ENCODE measurements at regions of chr1 and their contacts with region 1.

Region 1: GRCh38 chr1:11907275-11908094 is 18.7 kb downstream of the KIAA2013 start:
- DNase-seq: peak; percentile 94
- ATAC-seq: peak; percentile 65
- H3K4me3 Mint-ChIP-seq: peak overlapping the region; percentile 90
- H3K27ac Mint-ChIP-seq: peak overlapping the region; percentile 96
- H3K4me1 Mint-ChIP-seq: peaks cover 29% of the 10 kb centered on the region
- H3K27me3 Mint-ChIP-seq: peaks cover 14% of the 10 kb centered on the region
- CTCF ChIP-seq: peak; percentile 65

Region 2: DNA sequence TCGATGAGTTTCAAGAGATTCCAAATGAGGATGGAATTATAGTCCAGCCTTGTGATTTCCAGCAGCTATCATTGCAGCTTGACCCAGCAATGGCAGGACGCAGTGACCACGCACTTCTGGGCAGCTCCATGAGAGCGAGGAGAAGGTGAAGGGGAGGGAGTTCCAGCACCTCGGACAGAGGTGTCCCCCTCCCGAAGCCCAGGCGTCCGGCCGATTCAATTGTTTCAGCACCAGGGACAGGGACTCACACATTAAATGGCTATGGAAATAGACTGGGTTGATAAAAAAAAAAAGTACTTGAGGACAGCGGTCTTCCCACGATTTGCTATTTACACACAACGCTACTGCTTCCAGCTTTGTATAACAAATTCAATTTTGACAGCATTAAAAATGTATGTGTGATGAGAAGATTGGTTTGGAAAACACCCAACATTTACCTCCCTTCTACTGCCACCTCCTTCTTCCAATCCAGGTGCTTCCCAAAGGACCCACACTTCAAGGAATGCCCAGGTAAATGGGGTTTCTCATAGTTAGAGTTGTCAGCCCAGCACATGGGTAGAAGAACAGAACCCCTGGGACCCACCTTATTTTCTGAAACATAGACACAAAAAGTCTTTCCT is 356.7 kb before region 1 on chr1:
- CTCF ChIA-PET with region 1: no interaction called
- POLR2A ChIA-PET with region 1: no interaction called
- intact Hi-C with region 1: no loop called
- DNase-seq: peak; percentile 73
- ATAC-seq: peak; percentile 62
- H3K4me3 Mint-ChIP-seq: no peak overlapping the region
- H3K27ac Mint-ChIP-seq: no peak overlapping the region
- H3K4me1 Mint-ChIP-seq: peaks cover 4% of the 10 kb centered on the region
- H3K27me3 Mint-ChIP-seq: peaks cover 41% of the 10 kb centered on the region
- CTCF ChIP-seq: no peak

Region 3: DNA sequence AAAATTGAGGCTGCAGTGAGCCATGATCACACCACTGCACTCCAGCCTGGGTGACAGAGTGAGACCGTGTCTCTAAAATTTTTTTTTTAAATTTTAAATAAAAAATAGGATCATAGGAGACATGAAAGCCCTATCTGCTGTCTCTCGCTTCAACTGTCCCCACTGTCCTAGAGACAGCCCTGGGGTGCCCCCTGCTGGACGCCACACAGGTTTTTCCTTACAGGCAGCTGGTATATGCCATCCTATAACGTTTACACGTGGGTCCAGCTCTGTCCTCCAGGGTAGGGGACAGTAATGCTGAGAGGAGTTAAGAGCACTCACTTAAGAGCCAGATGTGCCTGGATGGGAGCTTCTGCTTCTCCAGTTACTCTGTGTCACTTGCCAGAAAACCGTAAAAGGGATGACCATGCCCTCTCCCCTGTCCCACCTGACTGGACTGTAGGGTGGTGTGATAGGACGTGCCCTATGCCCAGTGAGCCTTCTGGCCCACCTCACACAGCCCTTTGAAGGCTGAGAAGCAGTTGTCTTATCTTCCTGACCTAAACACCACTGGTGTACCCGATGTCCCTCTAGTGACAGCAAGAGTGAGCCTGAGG is 261.7 kb before region 1 on chr1:
- CTCF ChIA-PET with region 1: no interaction called
- POLR2A ChIA-PET with region 1: interaction called, 32 read pairs
- intact Hi-C with region 1: no loop called
- DNase-seq: peak; percentile 92
- ATAC-seq: peak; percentile 46
- H3K4me3 Mint-ChIP-seq: no peak overlapping the region
- H3K27ac Mint-ChIP-seq: no peak overlapping the region
- H3K4me1 Mint-ChIP-seq: peaks cover 11% of the 10 kb centered on the region
- H3K27me3 Mint-ChIP-seq: no peaks in the 10 kb centered on the region
- CTCF ChIP-seq: peak; percentile 85

Region 4: DNA sequence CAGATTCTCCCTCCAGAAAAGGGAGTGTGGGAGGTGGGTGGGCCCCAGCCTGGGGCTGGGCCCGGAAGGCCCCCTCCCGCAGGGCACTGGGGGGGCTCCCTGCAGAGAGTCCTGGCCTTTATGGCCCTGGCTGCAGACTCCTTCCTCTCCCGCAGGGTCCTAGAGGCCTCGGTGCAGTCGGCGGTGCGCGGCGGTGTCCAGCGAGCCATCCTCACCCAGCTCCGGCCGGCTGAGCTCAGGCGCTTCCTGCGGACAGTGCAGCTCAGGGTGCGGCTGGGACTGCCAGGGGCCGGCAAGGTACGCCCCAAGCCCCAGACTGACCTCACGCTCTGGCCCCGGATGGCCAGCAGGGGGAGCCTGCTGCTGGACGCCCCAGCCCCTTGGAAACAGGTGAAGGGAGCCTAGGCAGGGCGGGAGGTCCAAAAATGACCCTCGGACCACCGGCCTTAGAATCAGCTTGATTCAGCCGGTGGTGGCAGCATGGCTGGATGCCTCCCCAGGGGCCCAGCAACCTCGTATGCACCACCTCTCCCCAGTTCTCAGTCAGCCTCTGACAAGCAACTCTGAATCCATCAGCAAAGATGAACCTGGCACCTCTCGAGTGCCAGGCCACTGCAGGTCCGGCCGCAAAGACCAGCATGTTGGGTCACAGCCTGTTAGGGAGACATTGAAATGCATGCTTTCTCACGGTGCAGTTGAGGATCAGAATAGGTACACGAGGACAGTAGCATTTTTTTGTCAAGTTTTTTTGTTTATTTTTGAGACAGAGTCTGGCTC is 122.3 kb before region 1 on chr1:
- CTCF ChIA-PET with region 1: no interaction called
- POLR2A ChIA-PET with region 1: interaction called, 16 read pairs
- intact Hi-C with region 1: no loop called
- DNase-seq: peak; percentile 52
- ATAC-seq: peak; percentile 75
- H3K4me3 Mint-ChIP-seq: no peak overlapping the region
- H3K27ac Mint-ChIP-seq: no peak overlapping the region
- H3K4me1 Mint-ChIP-seq: peaks cover 3% of the 10 kb centered on the region
- H3K27me3 Mint-ChIP-seq: no peaks in the 10 kb centered on the region
- CTCF ChIP-seq: peak; percentile 80

Region 5: GRCh38 chr1:11851180-11851579 is 56.3 kb before region 1 on chr1:
- CTCF ChIA-PET with region 1: no interaction called
- POLR2A ChIA-PET with region 1: interaction called, 68 read pairs
- intact Hi-C with region 1: no loop called
- DNase-seq: no peak
- ATAC-seq: no peak
- H3K4me3 Mint-ChIP-seq: no peak overlapping the region
- H3K27ac Mint-ChIP-seq: no peak overlapping the region
- H3K4me1 Mint-ChIP-seq: no peaks in the 10 kb centered on the region
- H3K27me3 Mint-ChIP-seq: peaks cover 7% of the 10 kb centered on the region
- CTCF ChIP-seq: no peak

Region 6: DNA sequence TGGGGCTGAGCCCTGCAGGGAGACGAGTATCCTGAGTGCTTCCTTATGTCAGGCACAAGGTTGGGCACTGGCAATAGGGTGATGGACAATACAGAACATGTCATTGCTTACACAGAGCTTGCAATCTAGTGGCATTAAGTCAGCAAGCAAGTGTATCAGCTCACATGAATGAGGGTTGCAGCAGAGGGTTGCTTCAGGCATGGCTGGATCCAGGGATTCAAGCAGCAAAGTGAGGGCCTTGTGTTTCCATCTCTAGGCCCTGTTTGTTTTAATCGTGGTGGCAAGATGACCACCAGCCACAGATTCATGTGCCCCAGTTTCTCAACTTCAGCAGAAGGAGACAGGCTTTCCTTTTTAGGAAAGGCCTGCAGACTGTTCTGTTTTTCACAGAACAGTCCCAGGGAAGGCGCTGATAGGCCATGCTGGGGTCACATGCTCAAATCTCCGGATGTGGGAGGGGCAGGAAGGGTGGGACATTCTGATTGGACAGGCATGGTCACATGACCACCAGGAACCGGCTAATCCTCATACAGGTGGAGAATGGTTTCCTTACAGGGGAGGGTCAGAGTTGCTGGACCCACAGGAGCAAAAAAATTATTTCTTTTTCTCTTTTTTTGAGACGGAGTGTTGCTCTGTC is 41.5 kb after region 1 on chr1:
- CTCF ChIA-PET with region 1: no interaction called
- POLR2A ChIA-PET with region 1: interaction called, 12 read pairs
- intact Hi-C with region 1: no loop called
- DNase-seq: peak; percentile 35
- ATAC-seq: no peak
- H3K4me3 Mint-ChIP-seq: no peak overlapping the region
- H3K27ac Mint-ChIP-seq: no peak overlapping the region
- H3K4me1 Mint-ChIP-seq: no peaks in the 10 kb centered on the region
- H3K27me3 Mint-ChIP-seq: no peaks in the 10 kb centered on the region
- CTCF ChIP-seq: no peak

Region 7: GRCh38 chr1:12019858-12020509 is 112.5 kb after region 1 on chr1:
- CTCF ChIA-PET with region 1: no interaction called
- POLR2A ChIA-PET with region 1: interaction called, 57 read pairs
- intact Hi-C with region 1: no loop called
- DNase-seq: no peak
- ATAC-seq: no peak
- H3K4me3 Mint-ChIP-seq: peak overlapping the region; percentile 81
- H3K27ac Mint-ChIP-seq: peak overlapping the region; percentile 49
- H3K4me1 Mint-ChIP-seq: peaks cover 5% of the 10 kb centered on the region
- H3K27me3 Mint-ChIP-seq: no peaks in the 10 kb centered on the region
- CTCF ChIP-seq: no peak

Region 8: GRCh38 chr1:12087797-12088314 is 180.4 kb after region 1 on chr1:
- CTCF ChIA-PET with region 1: no interaction called
- POLR2A ChIA-PET with region 1: interaction called, 27 read pairs
- intact Hi-C with region 1: no loop called
- DNase-seq: peak; percentile 88
- ATAC-seq: peak; percentile 78
- H3K4me3 Mint-ChIP-seq: peak overlapping the region; percentile 25
- H3K27ac Mint-ChIP-seq: peak overlapping the region; percentile 90
- H3K4me1 Mint-ChIP-seq: peaks cover 37% of the 10 kb centered on the region
- H3K27me3 Mint-ChIP-seq: no peaks in the 10 kb centered on the region
- CTCF ChIP-seq: no peak

Region 9: GRCh38 chr1:12369258-12369657 is 461.8 kb after region 1 on chr1:
- CTCF ChIA-PET with region 1: no interaction called
- POLR2A ChIA-PET with region 1: no interaction called
- intact Hi-C with region 1: no loop called
- DNase-seq: no peak
- ATAC-seq: no peak
- H3K4me3 Mint-ChIP-seq: no peak overlapping the region
- H3K27ac Mint-ChIP-seq: no peak overlapping the region
- H3K4me1 Mint-ChIP-seq: peaks cover 7% of the 10 kb centered on the region
- H3K27me3 Mint-ChIP-seq: no peaks in the 10 kb centered on the region
- CTCF ChIP-seq: no peak